ENCODE measurements at regions of chr17 and their contacts with region 1.

Region 1: GRCh38 chr17:68255731-68256538 is 8.1 kb downstream of the AMZ2 start:
- DNase-seq: no peak
- ATAC-seq: no peak
- H3K4me3 Mint-ChIP-seq: peak overlapping the region; percentile 16
- H3K27ac Mint-ChIP-seq: peak overlapping the region; percentile 89
- H3K4me1 Mint-ChIP-seq: peaks cover 83% of the 10 kb centered on the region
- H3K27me3 Mint-ChIP-seq: no peaks in the 10 kb centered on the region
- CTCF ChIP-seq: no peak

Region 2: GRCh38 chr17:67862614-67863217 is 393.2 kb before region 1 on chr17:
- CTCF ChIA-PET with region 1: no interaction called
- POLR2A ChIA-PET with region 1: interaction called, 15 read pairs
- intact Hi-C with region 1: no loop called
- DNase-seq: no peak
- ATAC-seq: no peak
- H3K4me3 Mint-ChIP-seq: no peak overlapping the region
- H3K27ac Mint-ChIP-seq: peak overlapping the region; percentile 52
- H3K4me1 Mint-ChIP-seq: peaks cover 56% of the 10 kb centered on the region
- H3K27me3 Mint-ChIP-seq: no peaks in the 10 kb centered on the region
- CTCF ChIP-seq: no peak

Region 3: GRCh38 chr17:68184816-68185436 is 71.0 kb before region 1 on chr17:
- CTCF ChIA-PET with region 1: no interaction called
- POLR2A ChIA-PET with region 1: interaction called, 12 read pairs
- intact Hi-C with region 1: no loop called
- DNase-seq: no peak
- ATAC-seq: peak; percentile 69
- H3K4me3 Mint-ChIP-seq: peak overlapping the region; percentile 62
- H3K27ac Mint-ChIP-seq: peak overlapping the region; percentile 91
- H3K4me1 Mint-ChIP-seq: peaks cover 66% of the 10 kb centered on the region
- H3K27me3 Mint-ChIP-seq: no peaks in the 10 kb centered on the region
- CTCF ChIP-seq: no peak

Region 4: GRCh38 chr17:68238164-68238872 is 17.6 kb before region 1 on chr17:
- CTCF ChIA-PET with region 1: interaction called, 3 read pairs
- POLR2A ChIA-PET with region 1: interaction called, 285 read pairs
- intact Hi-C with region 1: loop called (anchors 1 kb)
- DNase-seq: no peak
- ATAC-seq: no peak
- H3K4me3 Mint-ChIP-seq: peak overlapping the region; percentile 79
- H3K27ac Mint-ChIP-seq: peak overlapping the region; percentile 99
- H3K4me1 Mint-ChIP-seq: peaks cover 72% of the 10 kb centered on the region
- H3K27me3 Mint-ChIP-seq: no peaks in the 10 kb centered on the region
- CTCF ChIP-seq: no peak

Region 5: DNA sequence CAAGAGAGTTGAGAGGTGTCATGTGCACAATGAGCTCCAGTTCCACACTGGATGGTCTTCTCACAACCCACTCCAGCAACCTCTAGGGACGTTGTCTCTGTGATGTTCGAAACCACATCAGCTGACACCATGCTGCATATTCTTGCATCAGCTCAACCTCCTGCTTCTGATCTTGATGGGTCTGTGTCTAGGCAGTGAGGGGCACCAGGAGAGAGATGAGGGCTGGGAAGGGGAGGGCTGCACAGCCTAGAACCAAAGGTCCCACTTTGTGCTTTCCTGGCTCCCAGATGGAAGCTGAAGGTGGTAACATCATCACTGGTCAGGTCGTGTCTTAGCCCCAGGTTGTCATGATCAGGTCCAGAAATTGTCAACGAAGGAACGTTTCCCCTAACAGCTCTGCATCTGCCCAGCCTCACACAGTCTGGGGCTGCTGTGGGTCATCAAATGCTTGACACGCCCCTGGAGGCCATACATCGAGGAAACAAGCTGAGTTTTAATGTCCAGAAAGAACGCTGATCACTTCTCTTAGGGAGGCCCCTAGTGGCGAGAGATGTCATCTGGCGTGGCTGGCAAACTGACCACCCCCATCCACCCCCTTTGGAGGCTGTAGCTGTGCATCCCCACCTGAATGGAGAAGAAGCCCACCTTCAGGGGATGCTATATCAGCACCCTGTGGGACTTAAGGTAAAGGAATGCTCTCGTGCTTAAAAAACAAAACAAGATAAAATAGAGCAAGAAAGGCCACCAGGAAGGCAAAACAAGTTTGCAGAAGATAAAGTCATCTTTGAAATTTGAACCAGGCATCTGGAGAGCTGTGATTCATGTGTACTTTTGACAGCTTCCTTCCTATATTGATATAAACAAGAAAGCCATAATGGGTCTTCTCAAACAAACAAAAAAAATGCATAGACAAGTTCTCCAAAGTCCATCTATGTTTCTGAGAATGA is 143.0 kb after region 1 on chr17:
- CTCF ChIA-PET with region 1: interaction called, 73 read pairs
- POLR2A ChIA-PET with region 1: interaction called, 3 read pairs
- intact Hi-C with region 1: no loop called
- DNase-seq: peak; percentile 23
- ATAC-seq: peak; percentile 76
- H3K4me3 Mint-ChIP-seq: no peak overlapping the region
- H3K27ac Mint-ChIP-seq: peak overlapping the region; percentile 62
- H3K4me1 Mint-ChIP-seq: peaks cover 7% of the 10 kb centered on the region
- H3K27me3 Mint-ChIP-seq: no peaks in the 10 kb centered on the region
- CTCF ChIP-seq: no peak